Mammary epithelial cell (primary cell): ENCODE measurements at regions of chr1 and their contacts with region 1.

Region 1: GRCh38 chr1:27300341-27301051 is 21.5 kb upstream of the TMEM222 start:
- DNase-seq: peak; percentile 73
- H3K4me3 ChIP-seq: no peak overlapping the region
- H3K27ac ChIP-seq: peak overlapping the region; percentile 86
- H3K4me1 ChIP-seq: peaks cover 28% of the 10 kb centered on the region
- H3K27me3 ChIP-seq: no peaks in the 10 kb centered on the region
- CTCF ChIP-seq: peak; percentile 96 to 98

Region 2: DNA sequence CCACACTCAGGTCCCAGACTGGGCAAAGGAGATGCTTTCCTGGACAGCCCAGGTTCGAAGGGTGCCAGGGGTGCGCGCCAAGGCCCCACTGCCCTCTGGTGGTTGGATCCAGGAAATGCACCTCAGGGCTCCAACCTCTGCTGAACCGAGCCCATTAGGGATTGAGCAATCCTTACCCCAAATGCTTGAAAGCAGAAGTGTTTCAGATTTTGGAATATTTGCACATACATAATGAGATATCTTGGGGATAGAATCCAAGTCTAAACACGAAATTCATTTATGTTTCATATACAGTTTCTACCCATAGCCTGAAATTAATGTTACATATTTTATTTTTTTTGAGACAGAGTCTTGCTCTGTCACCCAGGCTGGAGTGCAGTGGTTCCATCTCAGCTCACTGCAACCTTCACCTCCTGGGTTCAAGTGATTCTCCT is 203.0 kb before region 1 on chr1:
- CTCF ChIA-PET with region 1: interaction called, 11 read pairs
- dilution Hi-C with region 1: no loop called
- in situ Hi-C with region 1: no loop called
- intact Hi-C with region 1: no loop called
- DNase-seq: peak; percentile 70
- H3K4me3 ChIP-seq: no peak overlapping the region
- H3K27ac ChIP-seq: no peak overlapping the region
- H3K4me1 ChIP-seq: peaks cover 34% of the 10 kb centered on the region
- H3K27me3 ChIP-seq: no peaks in the 10 kb centered on the region
- CTCF ChIP-seq: peak; percentile 95

Region 3: DNA sequence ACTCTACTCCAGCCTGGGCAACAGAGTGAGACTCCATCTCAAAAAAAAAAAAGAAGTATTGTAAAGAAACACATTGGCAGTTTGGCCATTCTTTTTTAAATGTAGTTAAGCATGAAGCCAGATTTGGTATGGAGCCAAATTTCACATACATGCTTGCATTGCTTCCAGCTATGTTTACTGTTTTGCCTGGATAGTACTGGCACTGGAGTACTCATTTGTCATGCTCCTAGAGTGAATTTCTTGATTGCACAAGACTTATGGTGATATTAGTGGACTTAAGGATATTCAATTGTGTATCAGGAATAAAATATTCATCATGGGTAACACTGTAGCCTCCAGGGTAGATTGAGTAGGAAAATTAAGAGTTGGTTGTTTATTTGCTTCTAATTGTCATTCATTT is 121.1 kb before region 1 on chr1:
- CTCF ChIA-PET with region 1: no interaction called
- dilution Hi-C with region 1: no loop called
- in situ Hi-C with region 1: no loop called
- intact Hi-C with region 1: no loop called
- DNase-seq: peak; percentile 26
- H3K4me3 ChIP-seq: no peak overlapping the region
- H3K27ac ChIP-seq: no peak overlapping the region
- H3K4me1 ChIP-seq: no peaks in the 10 kb centered on the region
- H3K27me3 ChIP-seq: no peaks in the 10 kb centered on the region
- CTCF ChIP-seq: no peak

Region 4: DNA sequence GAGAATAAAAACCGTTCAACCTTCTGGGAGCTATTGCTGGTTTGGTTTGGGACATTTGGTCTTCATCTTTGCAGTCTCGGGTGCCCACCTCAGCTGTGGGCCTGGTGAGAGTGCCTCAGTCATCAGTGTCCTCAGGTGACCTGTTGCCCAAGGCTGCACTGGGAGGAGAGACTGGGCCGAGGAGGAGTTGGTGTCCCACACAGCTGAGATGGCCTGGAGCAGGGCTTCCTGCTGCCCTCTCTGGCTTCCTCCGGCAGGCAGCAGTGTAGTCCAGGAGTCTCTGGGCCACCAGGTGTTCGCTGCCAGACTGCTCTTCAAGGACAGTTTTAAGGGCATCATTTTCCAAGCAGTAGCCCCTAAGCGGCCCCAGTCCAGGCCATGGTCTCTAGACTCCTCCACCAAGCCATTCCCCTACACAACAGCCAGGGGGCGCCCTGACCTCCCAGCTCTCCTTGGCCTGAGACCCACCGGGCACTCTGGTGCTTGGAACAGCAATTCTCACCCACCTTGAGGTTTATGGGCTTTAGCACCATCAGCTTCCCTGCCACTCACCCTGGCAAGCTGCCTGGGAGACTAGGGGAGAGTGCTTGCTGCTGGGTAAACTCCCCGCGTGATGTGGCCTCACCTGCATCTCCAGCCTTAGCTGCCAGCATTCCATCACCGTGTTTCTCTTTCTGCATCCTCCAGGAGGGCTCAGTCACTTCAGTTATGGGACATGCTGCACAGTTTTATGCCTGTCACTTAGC is 32.2 kb after region 1 on chr1:
- CTCF ChIA-PET with region 1: no interaction called
- dilution Hi-C with region 1: no loop called
- in situ Hi-C with region 1: no loop called
- intact Hi-C with region 1: loop called (anchors 2 kb)
- DNase-seq: no peak
- H3K4me3 ChIP-seq: no peak overlapping the region
- H3K27ac ChIP-seq: no peak overlapping the region
- H3K4me1 ChIP-seq: no peaks in the 10 kb centered on the region
- H3K27me3 ChIP-seq: no peaks in the 10 kb centered on the region
- CTCF ChIP-seq: peak; percentile 86 to 90

Region 5: DNA sequence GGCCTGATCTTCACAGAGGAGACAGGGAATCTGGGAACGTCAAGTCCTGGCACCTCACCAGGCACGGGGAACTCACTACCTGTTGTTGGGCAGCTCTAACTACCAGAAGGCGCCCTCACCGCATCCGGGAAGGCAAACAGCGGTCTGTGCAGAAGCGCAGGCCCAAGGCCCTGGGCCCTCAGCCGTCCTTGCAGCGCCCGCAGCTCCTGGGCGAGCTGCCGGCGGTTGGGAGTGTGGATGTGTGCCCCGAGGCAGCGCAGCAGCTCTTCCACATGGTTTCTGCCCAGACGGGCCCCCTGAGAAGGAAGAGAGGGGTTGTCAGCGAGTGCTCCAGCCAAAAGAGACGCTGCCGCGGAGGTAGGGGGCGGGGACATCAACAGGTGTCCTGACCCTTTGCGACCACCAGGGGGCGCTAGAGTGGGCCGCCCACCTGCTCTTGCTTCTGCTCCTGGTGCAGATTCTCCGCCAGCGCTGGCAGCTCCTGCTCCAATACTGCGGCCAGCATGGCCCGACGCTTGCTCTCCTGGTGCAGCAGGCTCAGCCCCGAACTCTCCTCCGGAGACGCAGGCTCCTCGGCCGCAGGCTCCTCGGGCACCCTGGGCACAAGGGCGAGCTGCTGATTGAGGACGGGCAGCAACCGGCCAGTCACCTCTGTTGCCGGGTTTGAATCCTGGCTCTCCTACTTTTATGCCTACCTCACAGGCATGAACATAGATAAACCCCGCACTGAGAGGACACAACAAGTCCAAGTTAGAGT is 57.0 kb after region 1 on chr1:
- CTCF ChIA-PET with region 1: no interaction called
- dilution Hi-C with region 1: no loop called
- in situ Hi-C with region 1: no loop called
- intact Hi-C with region 1: loop called (anchors 1 kb)
- DNase-seq: no peak
- H3K4me3 ChIP-seq: no peak overlapping the region
- H3K27ac ChIP-seq: no peak overlapping the region
- H3K4me1 ChIP-seq: no peaks in the 10 kb centered on the region
- H3K27me3 ChIP-seq: no peaks in the 10 kb centered on the region
- CTCF ChIP-seq: peak; percentile 78 to 90

Region 6: GRCh38 chr1:27603681-27604578 is 303.4 kb after region 1 on chr1 and contains the start of gene AHDC1:
- CTCF ChIA-PET with region 1: no interaction called
- dilution Hi-C with region 1: no loop called
- in situ Hi-C with region 1: no loop called
- intact Hi-C with region 1: loop called (anchors 1 kb)
- DNase-seq: peak; percentile 89
- H3K4me3 ChIP-seq: peak within 1 kb of the TSS; percentile 77 to 93 (median 78)
- H3K27ac ChIP-seq: peak within 1 kb of the TSS; percentile 33
- H3K4me1 ChIP-seq: peaks cover 44% of the 10 kb centered on the region
- H3K27me3 ChIP-seq: no peaks in the 10 kb centered on the region
- CTCF ChIP-seq: peak in 1 of 2 donors; percentile 14
- total RNA-seq, gene AHDC1: 35.3 to 51.8 TPM